ENCODE measurements at regions of chr4 and their contacts with region 1.

Region 1: GRCh38 chr4:18689308-18690115 is 668.0 kb upstream of the LCORL start:
- DNase-seq: peak; percentile 73
- H3K4me3 Mint-ChIP-seq: no peak overlapping the region
- H3K27ac Mint-ChIP-seq: no peak overlapping the region
- H3K4me1 Mint-ChIP-seq: peaks cover 10% of the 10 kb centered on the region
- H3K27me3 Mint-ChIP-seq: no peaks in the 10 kb centered on the region
- CTCF ChIP-seq: peak; percentile 80

Region 2: GRCh38 chr4:18934197-18934596 is 244.7 kb after region 1 on chr4:
- CTCF ChIA-PET with region 1: interaction called, 5 read pairs
- POLR2A ChIA-PET with region 1: no interaction called
- intact Hi-C with region 1: loop called (anchors 1 kb)
- DNase-seq: peak; percentile 25
- H3K4me3 Mint-ChIP-seq: no peak overlapping the region
- H3K27ac Mint-ChIP-seq: no peak overlapping the region
- H3K4me1 Mint-ChIP-seq: no peaks in the 10 kb centered on the region
- H3K27me3 Mint-ChIP-seq: no peaks in the 10 kb centered on the region
- CTCF ChIP-seq: peak; percentile 15

Region 3: GRCh38 chr4:19224820-19225219 is 535.3 kb after region 1 on chr4:
- CTCF ChIA-PET with region 1: interaction called, 3 read pairs
- POLR2A ChIA-PET with region 1: no interaction called
- intact Hi-C with region 1: loop called (anchors 5 kb)
- DNase-seq: peak; percentile 27
- H3K4me3 Mint-ChIP-seq: no peak overlapping the region
- H3K27ac Mint-ChIP-seq: no peak overlapping the region
- H3K4me1 Mint-ChIP-seq: peaks cover 7% of the 10 kb centered on the region
- H3K27me3 Mint-ChIP-seq: no peaks in the 10 kb centered on the region
- CTCF ChIP-seq: peak; percentile 26

Measured in MCF 10A (cell line).